GM13976 (cell line): ENCODE measurements at regions of chr9 and their contacts with region 1.

Region 1: GRCh38 chr9:20622330-20623020 is at the start of gene MLLT3:
- DNase-seq: peak; percentile 96
- CTCF ChIP-seq: no peak

Region 2: DNA sequence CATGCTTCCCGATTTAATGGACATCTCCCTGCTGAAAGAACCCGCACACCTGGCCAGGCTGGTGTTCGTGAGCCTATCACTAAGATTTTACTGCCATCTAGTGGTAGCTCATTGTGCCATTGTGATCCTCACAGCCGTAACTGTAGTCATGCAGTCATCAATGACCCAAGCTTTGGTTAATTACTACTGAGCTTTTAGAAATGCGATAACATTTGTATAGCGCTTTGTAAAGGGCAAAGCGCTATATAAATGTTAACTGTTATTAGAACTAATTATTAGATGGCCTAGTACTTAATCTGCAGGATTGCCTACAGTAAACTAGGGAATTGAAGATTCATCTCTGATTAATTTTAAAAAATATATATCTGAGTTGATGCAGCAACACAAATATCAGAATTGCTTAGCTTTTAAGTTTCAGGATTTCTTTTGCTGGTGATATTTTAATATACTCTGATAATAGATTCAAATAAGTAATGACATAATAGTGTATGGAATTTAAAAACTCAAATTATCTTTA is 318.8 kb after region 1 on chr9:
- in situ Hi-C with region 1: loop called (anchors 5 kb)
- DNase-seq: peak; percentile 57
- CTCF ChIP-seq: peak; percentile 82

Region 3: DNA sequence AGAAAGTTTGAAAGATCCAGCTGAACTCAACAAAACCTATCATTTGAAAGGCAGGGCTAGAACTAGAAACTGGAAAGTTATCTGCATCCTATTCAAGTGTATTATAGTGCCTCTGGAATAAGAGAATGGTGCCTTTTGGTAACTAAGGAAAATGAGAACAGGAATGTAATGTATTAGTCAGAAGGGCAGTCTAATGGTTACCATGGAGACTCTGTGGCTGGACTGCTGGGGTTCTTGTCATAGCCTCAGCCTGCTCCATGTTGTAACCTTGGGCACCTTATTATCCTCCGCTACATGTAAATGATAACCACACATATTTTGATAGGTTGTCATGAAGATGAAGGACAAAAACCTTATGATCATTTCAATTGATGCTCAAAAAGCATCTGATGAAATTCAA is 479.8 kb after region 1 on chr9:
- in situ Hi-C with region 1: loop called (anchors 10 kb)
- DNase-seq: no peak
- CTCF ChIP-seq: no peak